Common myeloid progenitor, CD34-positive (primary cell): ENCODE measurements at regions of chr10 and their contacts with region 1.

Region 1: DNA sequence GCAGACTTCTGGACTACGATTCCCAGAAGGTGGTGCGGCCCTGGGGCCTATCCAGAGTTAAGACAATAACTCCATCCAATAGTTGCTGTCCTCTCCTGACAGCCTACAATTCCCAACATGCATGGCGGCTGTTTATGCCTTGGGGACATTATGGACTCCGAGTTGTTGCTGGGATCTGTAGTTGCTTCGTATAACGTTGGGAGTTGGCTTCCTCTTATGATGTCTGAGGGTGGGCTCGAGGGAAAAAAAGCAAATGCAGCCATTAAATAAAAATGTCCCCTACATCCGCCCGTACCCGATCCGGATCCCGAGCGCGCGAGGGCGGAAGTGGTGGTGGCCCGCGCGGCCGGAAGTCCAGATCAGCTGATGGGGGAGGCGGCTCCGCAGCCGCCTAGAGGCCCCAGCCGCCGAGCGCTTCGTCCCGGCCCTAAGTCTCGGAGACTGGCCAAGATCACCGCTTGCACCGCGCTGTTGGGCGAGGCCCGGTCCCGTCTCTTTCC is at the start of gene ZSWIM8:
- DNase-seq: peak; percentile 98 to 99 (median 98)
- H3K4me3 ChIP-seq: peak within 1 kb of the TSS; percentile 67 to 97 (median 88)
- H3K27ac ChIP-seq: peak within 1 kb of the TSS; percentile 70 to 85
- H3K4me1 ChIP-seq: peaks cover 18 to 45% (median 33%) of the 10 kb centered on the region in 4 experiments
- H3K27me3 ChIP-seq: no peaks in the 10 kb centered on the region

Region 2: GRCh38 chr10:73772280-73773151 is 12.8 kb before region 1 on chr10:
- CTCF ChIA-PET with region 1: interaction called, 39 read pairs
- POLR2A ChIA-PET with region 1: interaction called, 18 read pairs
- DNase-seq: peak; percentile 76 to 88 (median 80)
- H3K4me3 ChIP-seq: peak overlapping the region; percentile 77 to 98 (median 93)
- H3K27ac ChIP-seq: peak overlapping the region; percentile 58 to 90
- H3K4me1 ChIP-seq: peaks cover 10 to 40% (median 31%) of the 10 kb centered on the region in 4 experiments
- H3K27me3 ChIP-seq: no peaks in the 10 kb centered on the region

Region 3: GRCh38 chr10:73810735-73811465 is 25.6 kb after region 1 on chr10:
- CTCF ChIA-PET with region 1: interaction called, 11 read pairs
- POLR2A ChIA-PET with region 1: interaction called, 6 read pairs
- DNase-seq: peak; percentile 16 to 63 (median 60)
- H3K4me3 ChIP-seq: peak overlapping the region; percentile 76 to 86 (median 80)
- H3K27ac ChIP-seq: peak overlapping the region; percentile 75 to 87
- H3K4me1 ChIP-seq: peaks cover 0 to 8% (median 7%) of the 10 kb centered on the region in 4 experiments
- H3K27me3 ChIP-seq: no peaks in the 10 kb centered on the region